Endothelial cell of umbilical vein (primary cell): ENCODE measurements at regions of chr3 and their contacts with region 1.

Region 1: DNA sequence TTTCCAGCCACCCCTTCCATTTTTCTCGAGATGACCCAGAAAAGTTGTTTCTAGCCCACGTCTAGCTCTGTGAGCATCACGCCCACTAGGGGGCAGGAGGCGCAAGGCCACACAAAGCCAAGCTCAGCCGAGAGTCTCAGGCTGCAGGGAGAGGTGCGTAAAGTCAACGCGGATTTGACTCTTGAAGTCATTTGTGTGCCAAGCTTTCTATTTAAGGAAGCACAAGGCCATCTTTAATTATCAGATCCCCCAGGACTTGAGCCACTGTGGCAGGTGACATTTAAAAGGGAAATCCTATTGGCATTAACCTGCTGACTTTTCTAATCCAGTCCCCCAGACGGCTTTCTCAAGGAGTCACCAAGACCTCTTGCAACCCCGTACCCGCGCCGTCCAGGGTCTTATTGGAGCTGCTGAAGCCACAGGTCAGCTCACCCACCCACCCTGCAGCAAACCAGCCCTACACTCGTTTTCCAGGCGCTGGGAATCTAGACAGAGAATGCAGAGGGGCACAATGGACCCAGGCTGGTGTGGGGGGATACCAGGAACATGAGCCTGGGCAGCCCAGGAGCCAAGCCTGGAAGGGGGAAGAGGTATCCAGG is 62.1 kb downstream of the CAPN7 start:
- DNase-seq: peak; percentile 79
- H3K4me3 ChIP-seq: no peak overlapping the region
- H3K27ac ChIP-seq: peak overlapping the region; percentile 98
- H3K4me1 ChIP-seq: peaks cover 24% of the 10 kb centered on the region
- H3K27me3 ChIP-seq: no peaks in the 10 kb centered on the region
- CTCF ChIP-seq: peak; percentile 92 to 97
- POLR2A ChIP-seq: no peak

Region 2: DNA sequence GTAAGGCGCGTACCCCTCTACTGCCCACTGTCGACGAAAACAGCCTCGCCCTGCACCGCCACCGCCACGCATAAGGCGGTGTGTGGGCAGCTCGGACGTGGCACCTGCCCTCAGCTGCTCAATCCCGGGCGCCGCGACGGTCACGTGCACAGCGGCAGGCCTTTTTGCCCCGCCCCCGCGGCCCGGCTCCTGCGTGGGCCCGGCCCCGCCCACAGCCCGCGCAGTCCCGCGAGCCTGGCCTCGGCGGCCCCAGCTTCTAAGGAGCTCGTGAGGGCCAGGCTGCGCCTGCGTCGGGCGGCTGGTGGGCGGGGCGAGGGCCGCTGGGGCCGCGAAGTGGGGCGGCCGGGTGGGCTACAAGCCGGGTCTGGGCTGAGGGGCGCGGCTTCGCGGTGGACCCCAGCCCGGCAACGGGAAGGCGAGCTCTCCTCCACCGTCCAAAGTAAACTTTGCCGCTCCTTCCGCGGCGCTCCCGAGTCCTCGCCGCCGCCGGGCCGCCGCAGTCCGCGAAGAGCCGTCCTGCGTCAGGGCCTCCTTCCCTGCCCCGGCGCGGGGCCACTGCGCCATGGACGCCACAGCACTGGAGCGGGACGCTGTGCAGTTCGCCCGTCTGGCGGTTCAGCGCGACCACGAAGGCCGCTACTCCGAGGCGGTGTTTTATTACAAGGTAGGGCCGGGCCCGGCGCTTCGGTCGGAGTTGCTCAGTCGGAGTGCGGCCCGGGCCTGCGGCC is 62.0 kb before region 1 on chr3 and contains the start of gene CAPN7:
- CTCF ChIA-PET with region 1: interaction called, 11 read pairs
- POLR2A ChIA-PET with region 1: no interaction called
- dilution Hi-C with region 1: no loop called
- intact Hi-C with region 1: loop called (anchors 2 kb)
- DNase-seq: peak; percentile 98
- H3K4me3 ChIP-seq: peak within 1 kb of the TSS; percentile 69 to 94 (median 87)
- H3K27ac ChIP-seq: peak within 1 kb of the TSS; percentile 66
- H3K4me1 ChIP-seq: peaks cover 6% of the 10 kb centered on the region
- H3K27me3 ChIP-seq: no peaks in the 10 kb centered on the region
- CTCF ChIP-seq: peak; percentile 31 to 50
- POLR2A ChIP-seq: peak; percentile 86
- total RNA-seq, gene CAPN7: 28.8 and 32.7 TPM in 2 replicates

Region 3: GRCh38 chr3:15291589-15292541 is 23.7 kb after region 1 on chr3:
- CTCF ChIA-PET with region 1: interaction called, 20 read pairs
- POLR2A ChIA-PET with region 1: no interaction called
- dilution Hi-C with region 1: no loop called
- intact Hi-C with region 1: loop called (anchors 1 kb)
- DNase-seq: peak; percentile 77
- H3K4me3 ChIP-seq: no peak overlapping the region
- H3K27ac ChIP-seq: peak overlapping the region; percentile 85
- H3K4me1 ChIP-seq: peaks cover 51% of the 10 kb centered on the region
- H3K27me3 ChIP-seq: no peaks in the 10 kb centered on the region
- CTCF ChIP-seq: no peak
- POLR2A ChIP-seq: no peak

Region 4: GRCh38 chr3:15319575-15319974 is 51.4 kb after region 1 on chr3:
- CTCF ChIA-PET with region 1: interaction called, 17 read pairs
- POLR2A ChIA-PET with region 1: no interaction called
- dilution Hi-C with region 1: no loop called
- intact Hi-C with region 1: no loop called
- DNase-seq: no peak
- H3K4me3 ChIP-seq: no peak overlapping the region
- H3K27ac ChIP-seq: no peak overlapping the region
- H3K4me1 ChIP-seq: peaks cover 22% of the 10 kb centered on the region
- H3K27me3 ChIP-seq: no peaks in the 10 kb centered on the region
- CTCF ChIP-seq: no peak
- POLR2A ChIP-seq: no peak

Region 5: GRCh38 chr3:15345608-15346137 is 77.5 kb after region 1 on chr3:
- CTCF ChIA-PET with region 1: interaction called, 12 read pairs
- POLR2A ChIA-PET with region 1: no interaction called
- dilution Hi-C with region 1: no loop called
- intact Hi-C with region 1: no loop called
- DNase-seq: no peak
- H3K4me3 ChIP-seq: no peak overlapping the region
- H3K27ac ChIP-seq: no peak overlapping the region
- H3K4me1 ChIP-seq: no peaks in the 10 kb centered on the region
- H3K27me3 ChIP-seq: peaks cover 0 to 3% of the 10 kb centered on the region in 2 experiments
- CTCF ChIP-seq: no peak
- POLR2A ChIP-seq: no peak

Region 6: DNA sequence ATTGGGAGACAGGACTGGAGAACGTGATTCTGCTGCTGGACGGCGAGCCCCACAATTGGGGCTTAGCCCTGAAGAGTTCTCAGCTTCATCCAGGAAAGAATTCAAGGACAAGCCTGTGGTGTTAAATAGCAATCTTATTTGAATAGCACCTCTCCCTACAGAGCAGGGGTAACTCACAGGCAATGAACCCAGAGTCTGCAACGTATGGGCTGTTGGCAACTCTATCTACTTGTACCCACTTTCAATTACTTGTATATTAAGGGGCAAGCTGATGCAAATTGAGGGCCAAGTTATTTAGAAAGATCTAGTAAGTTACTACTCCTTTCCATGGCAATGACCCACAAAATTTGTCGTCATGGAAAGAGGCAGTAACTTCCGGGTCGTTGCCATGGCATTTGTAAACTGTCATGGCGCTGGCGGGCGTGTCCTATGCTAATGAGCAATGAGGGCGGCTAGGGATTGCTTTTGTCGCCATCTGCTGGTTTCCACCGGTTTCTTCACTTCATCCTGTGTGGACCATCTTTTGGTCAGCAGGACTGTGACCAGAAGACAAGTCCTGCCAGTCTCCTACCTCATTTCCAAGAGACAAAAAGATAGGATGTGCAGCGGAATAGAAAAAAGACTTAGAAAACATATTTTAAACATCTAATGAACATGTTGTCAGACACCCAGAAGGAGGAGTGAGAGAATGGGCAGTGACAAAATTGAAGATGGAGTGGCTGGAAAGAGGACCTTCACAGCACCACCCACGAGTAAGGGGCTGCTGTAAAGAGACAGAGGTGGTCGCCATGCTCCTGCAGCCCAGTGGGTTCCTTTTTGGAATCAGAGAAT is 110.0 kb after region 1 on chr3:
- CTCF ChIA-PET with region 1: interaction called, 67 read pairs
- POLR2A ChIA-PET with region 1: no interaction called
- dilution Hi-C with region 1: loop called (anchors 5 kb)
- intact Hi-C with region 1: loop called (anchors 1 kb)
- DNase-seq: peak; percentile 96
- H3K4me3 ChIP-seq: no peak overlapping the region
- H3K27ac ChIP-seq: peak overlapping the region; percentile 71
- H3K4me1 ChIP-seq: peaks cover 2% of the 10 kb centered on the region
- H3K27me3 ChIP-seq: no peaks in the 10 kb centered on the region
- CTCF ChIP-seq: peak; percentile 81 to 91
- POLR2A ChIP-seq: no peak

Region 7: GRCh38 chr3:15399970-15400369 is 131.8 kb after region 1 on chr3:
- CTCF ChIA-PET with region 1: interaction called, 350 read pairs
- POLR2A ChIA-PET with region 1: interaction called, 8 read pairs
- dilution Hi-C with region 1: no loop called
- intact Hi-C with region 1: loop called (anchors 1 kb)
- DNase-seq: no peak
- H3K4me3 ChIP-seq: no peak overlapping the region
- H3K27ac ChIP-seq: no peak overlapping the region
- H3K4me1 ChIP-seq: no peaks in the 10 kb centered on the region
- H3K27me3 ChIP-seq: no peaks in the 10 kb centered on the region
- CTCF ChIP-seq: no peak
- POLR2A ChIP-seq: no peak